Left cardiac atrium (tissue), 4 donors: ENCODE measurements at regions of chr6 and their contacts with region 1.

Region 1: GRCh38 chr6:167285077-167285770 is 5.9 kb upstream of the UNC93A start:
- DNase-seq: no peak
- ATAC-seq: no peak

Region 2: DNA sequence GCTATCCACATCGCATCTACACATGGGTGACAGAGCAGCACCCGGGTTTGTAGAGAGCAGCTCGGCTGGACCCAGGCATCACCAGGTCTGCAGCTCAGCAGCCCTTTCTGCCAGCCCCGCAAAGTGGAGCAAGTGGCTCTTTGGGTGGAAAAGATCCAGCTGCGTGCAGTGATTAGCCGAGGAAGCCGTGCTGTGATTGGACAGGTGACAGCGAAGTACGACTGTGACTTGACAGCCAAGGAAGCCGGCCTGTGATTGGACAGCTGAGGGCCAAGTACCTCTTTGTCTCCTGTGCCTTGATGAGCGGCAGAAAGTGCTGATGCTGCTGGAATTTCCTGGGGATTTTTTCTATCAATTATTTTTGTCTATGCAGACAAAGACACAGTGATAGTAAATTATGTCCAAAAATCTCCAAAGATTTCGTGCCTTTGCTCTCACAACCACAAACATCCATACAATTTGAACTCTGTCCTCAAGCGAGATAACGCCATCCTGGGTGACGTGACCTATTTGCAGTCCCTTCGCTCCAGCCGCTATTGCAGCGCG is 65.2 kb before region 1 on chr6:
- intact Hi-C with region 1: loop called in 1 of 2 experiments (anchors 10 kb)
- DNase-seq: no peak
- ATAC-seq: no peak

Region 3: DNA sequence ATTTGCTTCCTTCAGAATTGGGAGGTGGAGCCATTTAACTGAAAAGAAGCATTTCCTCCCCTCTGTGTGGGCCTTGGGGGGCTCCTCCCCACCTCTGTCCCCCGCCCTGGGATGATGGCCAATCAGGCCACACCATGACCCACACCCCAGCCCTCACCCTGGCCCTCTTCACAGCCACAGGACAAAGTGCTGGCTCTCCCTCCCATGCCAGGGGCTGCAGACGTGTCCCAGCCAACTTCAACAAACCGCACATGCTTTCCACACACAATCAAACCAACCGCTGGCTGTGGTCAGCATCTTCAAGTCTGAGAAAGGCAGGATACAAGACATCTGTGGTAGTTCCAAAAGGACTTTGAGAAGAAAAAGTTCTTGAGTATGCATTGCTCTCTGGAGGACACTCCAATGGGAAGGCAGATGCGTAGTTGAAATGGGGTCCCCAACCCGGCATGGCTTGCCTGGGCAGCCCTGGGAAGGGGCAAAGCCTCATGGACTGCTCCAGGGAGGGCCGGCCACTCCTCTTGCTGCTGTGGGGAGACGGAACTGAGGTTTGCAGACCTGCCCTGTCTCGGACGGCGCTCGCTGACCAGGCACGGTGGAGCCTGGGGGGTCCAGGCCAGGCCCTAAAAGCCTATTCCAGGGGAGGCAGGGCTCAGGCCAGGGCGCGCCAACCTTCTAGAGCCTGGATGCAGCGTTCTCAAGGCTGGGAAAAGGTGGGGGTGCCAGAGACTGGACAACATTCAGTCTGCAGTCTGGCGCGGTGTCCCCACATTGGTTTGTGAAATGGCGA is 51.8 kb after region 1 on chr6:
- intact Hi-C with region 1: no loop called
- DNase-seq: no peak
- ATAC-seq: no peak